GM12878 (cell line): ENCODE measurements at regions of chr19 and their contacts with region 1.

Region 1: GRCh38 chr19:18865973-18866799 is 29.8 kb downstream of the CERS1 start:
- DNase-seq: no peak
- ATAC-seq: peak; percentile 97
- H3K4me3 ChIP-seq: no peak overlapping the region
- H3K27ac ChIP-seq: no peak overlapping the region
- H3K4me1 ChIP-seq: peaks cover 4% of the 10 kb centered on the region
- H3K27me3 ChIP-seq: no peaks in the 10 kb centered on the region
- CTCF ChIP-seq: peak; percentile 83 to 96 (median 92); a peak in 4 of 6 replicates
- EP300 ChIP-seq: no peak
- POLR2A ChIP-seq: peak; percentile 38
- RAD21 ChIP-seq: peak; percentile 68

Region 2: GRCh38 chr19:18450931-18451845 is 415.0 kb before region 1 on chr19:
- CTCF ChIA-PET with region 1: no interaction called
- POLR2A ChIA-PET with region 1: no interaction called
- RAD21 ChIA-PET with region 1: no interaction called
- SMC1A ChIA-PET with region 1: no interaction called
- in situ Hi-C with region 1: loop called (anchors 25 kb)
- intact Hi-C with region 1: no loop called
- DNase-seq: no peak
- ATAC-seq: peak; percentile 98
- H3K4me3 ChIP-seq: no peak overlapping the region
- H3K27ac ChIP-seq: no peak overlapping the region
- H3K4me1 ChIP-seq: no peaks in the 10 kb centered on the region
- H3K27me3 ChIP-seq: no peaks in the 10 kb centered on the region
- CTCF ChIP-seq: peak; percentile 95 to 98 (median 98)
- EP300 ChIP-seq: no peak
- POLR2A ChIP-seq: peak; percentile 7; the same call in 1 of the 2 replicates
- RAD21 ChIP-seq: peak; percentile 91

Region 3: GRCh38 chr19:18762125-18763023 is 103.8 kb before region 1 on chr19:
- CTCF ChIA-PET with region 1: no interaction called
- POLR2A ChIA-PET with region 1: no interaction called
- RAD21 ChIA-PET with region 1: no interaction called
- SMC1A ChIA-PET with region 1: no interaction called
- in situ Hi-C with region 1: no loop called
- intact Hi-C with region 1: no loop called
- DNase-seq: no peak
- ATAC-seq: no peak
- H3K4me3 ChIP-seq: no peak overlapping the region
- H3K27ac ChIP-seq: no peak overlapping the region
- H3K4me1 ChIP-seq: peaks cover 6% of the 10 kb centered on the region
- H3K27me3 ChIP-seq: no peaks in the 10 kb centered on the region
- CTCF ChIP-seq: no peak
- EP300 ChIP-seq: no peak
- POLR2A ChIP-seq: no peak
- RAD21 ChIP-seq: no peak

Region 4: GRCh38 chr19:18879579-18880373 is 13.6 kb after region 1 on chr19:
- CTCF ChIA-PET with region 1: no interaction called
- POLR2A ChIA-PET with region 1: interaction called, 12 read pairs
- RAD21 ChIA-PET with region 1: interaction called, 3 read pairs
- SMC1A ChIA-PET with region 1: no interaction called
- in situ Hi-C with region 1: no loop called
- intact Hi-C with region 1: no loop called
- DNase-seq: no peak
- ATAC-seq: peak; percentile 72
- H3K4me3 ChIP-seq: no peak overlapping the region
- H3K27ac ChIP-seq: no peak overlapping the region
- H3K4me1 ChIP-seq: no peaks in the 10 kb centered on the region
- H3K27me3 ChIP-seq: no peaks in the 10 kb centered on the region
- CTCF ChIP-seq: no peak
- EP300 ChIP-seq: no peak
- POLR2A ChIP-seq: no peak
- RAD21 ChIP-seq: no peak

Region 5: DNA sequence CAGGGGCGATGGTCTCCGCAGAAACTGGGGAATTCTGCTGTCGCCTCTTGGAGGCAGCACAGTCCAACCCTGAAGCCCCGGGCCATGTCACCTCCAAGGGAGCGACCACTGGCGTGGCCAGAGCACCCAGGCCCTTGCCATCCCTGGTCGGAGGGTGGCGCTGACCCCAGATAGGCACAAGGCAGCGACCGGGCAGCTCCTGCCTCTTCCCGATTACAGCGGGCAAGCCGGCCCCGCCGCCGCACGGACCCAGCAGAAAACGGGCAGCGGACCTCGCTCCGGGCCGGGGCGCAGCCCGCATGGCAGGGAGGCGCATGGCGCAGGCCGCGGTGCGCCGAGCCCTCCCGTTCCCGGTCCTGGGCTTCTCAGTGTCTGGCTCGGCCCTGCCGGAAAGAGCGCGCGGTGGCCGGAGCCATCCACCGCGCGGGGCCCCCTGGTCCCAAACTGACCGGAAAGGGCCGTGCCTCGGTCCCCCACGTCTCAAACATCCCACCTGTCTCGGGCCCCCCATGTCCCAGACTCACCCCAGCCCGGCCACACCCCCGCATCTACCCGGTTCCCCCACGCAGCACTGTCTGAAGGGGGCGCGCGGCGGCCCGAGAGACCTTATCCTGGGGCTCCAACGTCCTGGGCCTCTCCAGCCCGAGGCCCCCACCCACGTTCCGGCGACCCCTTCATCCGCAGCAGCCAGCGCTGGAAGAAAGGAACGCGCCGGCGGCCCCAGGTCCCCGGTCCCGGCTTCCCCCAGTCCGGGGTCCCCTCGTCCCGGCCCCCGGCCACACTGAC is 29.0 kb after region 1 on chr19:
- CTCF ChIA-PET with region 1: no interaction called
- POLR2A ChIA-PET with region 1: no interaction called
- RAD21 ChIA-PET with region 1: no interaction called
- SMC1A ChIA-PET with region 1: no interaction called
- in situ Hi-C with region 1: no loop called
- intact Hi-C with region 1: no loop called
- DNase-seq: no peak
- ATAC-seq: peak; percentile 50
- H3K4me3 ChIP-seq: no peak overlapping the region
- H3K27ac ChIP-seq: no peak overlapping the region
- H3K4me1 ChIP-seq: no peaks in the 10 kb centered on the region
- H3K27me3 ChIP-seq: peaks cover 4% of the 10 kb centered on the region in 2 experiments; a peak in 3 of 4 replicates
- CTCF ChIP-seq: peak in 1 of 3 experiments; percentile 14; a peak in 2 of 6 replicates
- EP300 ChIP-seq: no peak
- POLR2A ChIP-seq: no peak
- RAD21 ChIP-seq: no peak

Region 6: GRCh38 chr19:18987456-18987855 is 121.3 kb after region 1 on chr19:
- CTCF ChIA-PET with region 1: interaction called, 10 read pairs
- POLR2A ChIA-PET with region 1: no interaction called
- RAD21 ChIA-PET with region 1: no interaction called
- SMC1A ChIA-PET with region 1: no interaction called
- in situ Hi-C with region 1: no loop called
- intact Hi-C with region 1: no loop called
- DNase-seq: no peak
- ATAC-seq: no peak
- H3K4me3 ChIP-seq: no peak overlapping the region
- H3K27ac ChIP-seq: no peak overlapping the region
- H3K4me1 ChIP-seq: no peaks in the 10 kb centered on the region
- H3K27me3 ChIP-seq: peaks cover 0 to 4% of the 10 kb centered on the region in 2 experiments; a peak in 2 of 4 replicates
- CTCF ChIP-seq: no peak
- EP300 ChIP-seq: no peak
- POLR2A ChIP-seq: no peak
- RAD21 ChIP-seq: no peak